Activated CD8-positive, alpha-beta T cell treated with anti-CD3 and anti-CD28 coated beads for 36 hours (primary cell): ENCODE measurements at regions of chrX and their contacts with region 1.

Region 1: GRCh38 chrX:41010188-41010846 is 74.9 kb upstream of the USP9X start:
- DNase-seq: peak; percentile 72
- ATAC-seq: peak; percentile 90
- H3K4me3 Mint-ChIP-seq: peak overlapping the region; percentile 57
- H3K27ac Mint-ChIP-seq: peak overlapping the region; percentile 75
- H3K4me1 Mint-ChIP-seq: peaks cover 24% of the 10 kb centered on the region
- H3K27me3 Mint-ChIP-seq: no peaks in the 10 kb centered on the region
- CTCF ChIP-seq: no peak

Region 2: DNA sequence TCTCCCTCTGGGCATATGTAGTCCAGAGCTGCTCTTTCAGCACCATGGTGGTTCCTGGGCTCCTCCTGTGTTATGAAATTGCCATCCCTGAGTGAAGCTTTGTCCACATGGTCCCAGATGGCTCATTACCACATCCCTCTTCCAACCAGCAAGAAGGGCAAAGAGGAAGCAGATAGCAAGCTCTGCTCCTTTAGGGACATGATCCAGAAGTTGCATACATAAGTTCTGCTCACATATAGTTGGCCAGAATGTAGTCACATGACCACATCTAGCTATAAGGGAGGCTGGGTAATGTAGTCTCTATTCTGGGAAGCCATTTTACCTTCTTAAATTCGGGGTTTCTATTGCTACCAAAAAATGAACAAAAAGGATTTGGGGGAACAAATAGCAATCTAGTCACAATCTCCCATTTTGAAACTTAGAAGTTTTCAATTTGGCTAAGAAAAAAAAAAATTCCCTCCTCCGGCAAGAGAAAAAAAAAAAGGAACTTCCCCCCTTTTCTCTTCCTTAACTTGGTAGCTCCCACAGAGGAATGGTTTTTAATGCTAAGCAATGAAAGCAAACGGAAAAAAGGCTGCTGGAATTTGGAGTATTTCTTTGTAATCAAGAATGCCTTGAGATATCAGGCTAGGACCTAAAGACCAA is 13.3 kb before region 1 on chrX:
- CTCF ChIA-PET with region 1: no interaction called
- POLR2A ChIA-PET with region 1: no interaction called
- intact Hi-C with region 1: no loop called
- DNase-seq: no peak
- ATAC-seq: peak; percentile 49
- H3K4me3 Mint-ChIP-seq: no peak overlapping the region
- H3K27ac Mint-ChIP-seq: no peak overlapping the region
- H3K4me1 Mint-ChIP-seq: no peaks in the 10 kb centered on the region
- H3K27me3 Mint-ChIP-seq: no peaks in the 10 kb centered on the region
- CTCF ChIP-seq: no peak

Region 3: DNA sequence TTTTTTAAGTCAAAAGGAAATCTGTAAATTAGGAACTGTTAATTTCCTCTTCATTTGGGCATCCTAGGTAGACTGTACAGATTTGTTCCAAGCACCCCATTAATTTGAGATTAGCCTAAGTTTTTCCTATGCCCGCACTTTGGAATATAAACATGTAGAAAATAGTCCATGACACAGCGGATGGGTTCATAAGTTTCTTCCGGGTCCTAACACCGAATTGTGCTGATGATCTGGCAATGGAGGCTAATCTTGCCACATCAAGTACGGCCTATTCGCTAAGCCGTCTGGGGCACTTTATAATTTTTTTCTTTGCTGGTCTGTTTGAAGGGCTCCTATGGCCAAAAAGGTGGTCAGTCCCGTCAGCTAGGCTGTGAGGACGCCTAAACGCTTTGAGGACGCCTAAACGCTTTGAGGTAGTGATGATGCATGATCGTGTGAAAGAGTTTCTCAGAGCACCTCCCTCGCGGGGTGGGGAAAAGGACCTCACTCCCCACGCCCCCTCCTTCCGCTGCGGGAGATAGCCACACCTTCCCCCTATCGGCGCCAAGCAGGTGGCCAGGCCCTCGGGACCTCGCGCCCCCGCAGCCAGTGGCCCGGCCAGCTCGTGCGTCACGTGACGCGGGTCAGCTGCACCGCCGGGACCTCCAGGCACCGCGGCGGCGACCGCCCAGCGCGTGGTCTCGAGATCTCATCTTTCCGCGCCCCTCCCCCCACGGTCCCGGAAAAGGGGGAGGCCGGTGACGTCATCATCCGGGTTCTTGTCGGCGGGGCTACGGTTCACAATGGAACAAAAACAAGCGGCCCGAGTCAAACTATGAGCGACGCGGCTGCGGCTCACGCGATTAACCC is 74.0 kb after region 1 on chrX:
- CTCF ChIA-PET with region 1: interaction called, 3 read pairs
- POLR2A ChIA-PET with region 1: interaction called, 4 read pairs
- intact Hi-C with region 1: loop called (anchors 5 kb)
- DNase-seq: peak; percentile 97
- ATAC-seq: peak; percentile 70
- H3K4me3 Mint-ChIP-seq: peak overlapping the region; percentile 88
- H3K27ac Mint-ChIP-seq: peak overlapping the region; percentile 100
- H3K4me1 Mint-ChIP-seq: peaks cover 18% of the 10 kb centered on the region
- H3K27me3 Mint-ChIP-seq: no peaks in the 10 kb centered on the region
- CTCF ChIP-seq: no peak